A549 (cell line): ENCODE measurements at regions of chr3 and their contacts with region 1.

Region 1: GRCh38 chr3:113721636-113722035 is 24.4 kb downstream of the NAA50 start:
- DNase-seq: no peak
- ATAC-seq: no peak
- H3K4me3 ChIP-seq: no peak overlapping the region
- H3K27ac ChIP-seq: 0 out of 6 replicates have a peak overlapping the region, but pooled peaks of 1 of the 2 experiments have one; percentile 11
- H3K4me1 ChIP-seq: no peaks in the 10 kb centered on the region
- CTCF ChIP-seq: no peak
- EP300 ChIP-seq: no peak
- POLR2A ChIP-seq: no peak
- RAD21 ChIP-seq: no peak

Region 2: GRCh38 chr3:113736548-113737089 is 15.0 kb after region 1 on chr3:
- CTCF ChIA-PET with region 1: interaction called, 17 read pairs
- POLR2A ChIA-PET with region 1: no interaction called
- DNase-seq: peak; percentile 25 to 57
- ATAC-seq: peak; percentile 81 to 88; a peak in 5 of 6 replicates
- H3K4me3 ChIP-seq: no peak overlapping the region
- H3K27ac ChIP-seq: no peak overlapping the region
- H3K4me1 ChIP-seq: peaks cover 37% of the 10 kb centered on the region; the same call in 2 of the 3 replicates
- CTCF ChIP-seq: peak; percentile 79
- EP300 ChIP-seq: no peak
- POLR2A ChIP-seq: no peak
- RAD21 ChIP-seq: peak; percentile 76 to 77